Thyroid gland (tissue), 4 donors: ENCODE measurements at regions of chr18 and their contacts with region 1.

Region 1: DNA sequence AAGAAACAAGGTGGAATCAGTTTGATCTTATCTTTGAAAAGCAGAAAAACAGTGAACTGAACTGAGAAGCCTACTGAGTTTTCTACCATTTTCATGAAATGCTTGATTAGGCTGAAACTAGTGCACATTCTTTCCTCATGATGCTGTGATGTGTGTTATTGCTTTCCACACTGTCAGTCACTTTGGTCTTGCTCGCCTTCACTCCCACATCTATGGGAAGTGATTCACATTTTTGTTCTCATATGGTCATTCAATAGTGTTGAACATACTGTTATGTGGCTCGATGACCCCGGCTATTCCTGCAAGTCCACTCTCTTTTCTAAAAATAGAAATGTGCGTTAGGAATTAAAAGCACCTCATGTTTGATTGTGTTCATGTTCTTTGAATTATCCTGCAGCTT is 129.7 kb downstream of the TGIF1 start:
- DNase-seq: no peak
- H3K4me3 ChIP-seq: no peak overlapping the region
- H3K27ac ChIP-seq: no peak overlapping the region
- H3K4me1 ChIP-seq: no peaks in the 10 kb centered on the region
- H3K27me3 ChIP-seq: no peaks in the 10 kb centered on the region
- CTCF ChIP-seq: no peak
- POLR2A ChIP-seq: no peak

Region 2: GRCh38 chr18:3447895-3448837 is 131.5 kb before region 1 on chr18:
- intact Hi-C with region 1: no loop called
- DNase-seq: peak; percentile 97
- H3K4me3 ChIP-seq: peak overlapping the region; percentile 13 to 96 (median 85)
- H3K27ac ChIP-seq: peak overlapping the region; percentile 93 to 100 (median 98)
- H3K4me1 ChIP-seq: peaks cover 15 to 19% of the 10 kb centered on the region in 2 donors
- H3K27me3 ChIP-seq: no peaks in the 10 kb centered on the region
- CTCF ChIP-seq: no peak
- POLR2A ChIP-seq: peak; percentile 95 to 97

Region 3: GRCh38 chr18:3472681-3473544 is 106.8 kb before region 1 on chr18:
- intact Hi-C with region 1: loop called (anchors 10 kb)
- DNase-seq: no peak
- H3K4me3 ChIP-seq: no peak overlapping the region
- H3K27ac ChIP-seq: no peak overlapping the region
- H3K4me1 ChIP-seq: peaks cover 3 to 11% of the 10 kb centered on the region in 2 donors
- H3K27me3 ChIP-seq: no peaks in the 10 kb centered on the region
- CTCF ChIP-seq: no peak
- POLR2A ChIP-seq: no peak